ENCODE measurements at regions of chr6 and their contacts with region 1.

Region 1: GRCh38 chr6:42260972-42261371 is 43.3 kb upstream of the MRPS10 start:
- DNase-seq: peak; percentile 22 to 42 (median 37)
- H3K4me3 ChIP-seq: no peak overlapping the region
- H3K27ac ChIP-seq: no peak overlapping the region
- H3K4me1 ChIP-seq: no peaks in the 10 kb centered on the region
- H3K27me3 ChIP-seq: no peaks in the 10 kb centered on the region

Region 2: GRCh38 chr6:42175860-42176259 is 85.1 kb before region 1 on chr6:
- CTCF ChIA-PET with region 1: no interaction called
- POLR2A ChIA-PET with region 1: no interaction called
- DNase-seq: peak in 1 of 3 donors; percentile 8
- H3K4me3 ChIP-seq: no peak overlapping the region
- H3K27ac ChIP-seq: no peak overlapping the region
- H3K4me1 ChIP-seq: peaks cover 0 to 9% (median 6%) of the 10 kb centered on the region in 4 experiments
- H3K27me3 ChIP-seq: peaks cover 0 to 5% (median 0%) of the 10 kb centered on the region in 5 experiments

Region 3: DNA sequence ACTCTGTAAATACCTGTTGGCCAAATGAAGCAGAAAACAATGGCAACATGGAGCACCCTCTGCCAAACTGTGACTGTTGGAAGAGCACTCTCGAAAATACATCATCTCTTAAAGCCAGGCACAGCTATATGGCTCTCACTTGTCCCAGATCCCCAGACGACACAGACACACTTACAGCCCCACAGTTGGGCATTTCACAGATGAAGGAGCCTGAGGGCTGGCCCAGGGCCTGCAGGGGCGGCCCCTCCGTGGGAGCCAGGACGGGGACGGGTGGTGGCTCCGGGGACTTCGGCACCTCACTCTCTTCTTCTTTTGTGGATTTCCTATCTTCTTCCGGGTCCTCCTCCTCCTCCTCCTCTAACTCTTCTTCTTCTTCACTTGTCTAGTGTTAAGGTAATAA is 24.9 kb before region 1 on chr6:
- CTCF ChIA-PET with region 1: no interaction called
- POLR2A ChIA-PET with region 1: no interaction called
- DNase-seq: no peak
- H3K4me3 ChIP-seq: no peak overlapping the region
- H3K27ac ChIP-seq: no peak overlapping the region
- H3K4me1 ChIP-seq: no peaks in the 10 kb centered on the region
- H3K27me3 ChIP-seq: no peaks in the 10 kb centered on the region

Region 4: GRCh38 chr6:42276034-42276890 is 15.3 kb after region 1 on chr6:
- CTCF ChIA-PET with region 1: interaction called, 10 read pairs
- POLR2A ChIA-PET with region 1: interaction called, 4 read pairs
- DNase-seq: no peak
- H3K4me3 ChIP-seq: no peak overlapping the region
- H3K27ac ChIP-seq: no peak overlapping the region
- H3K4me1 ChIP-seq: peaks cover 0 to 23% (median 14%) of the 10 kb centered on the region in 4 experiments
- H3K27me3 ChIP-seq: no peaks in the 10 kb centered on the region

Region 5: DNA sequence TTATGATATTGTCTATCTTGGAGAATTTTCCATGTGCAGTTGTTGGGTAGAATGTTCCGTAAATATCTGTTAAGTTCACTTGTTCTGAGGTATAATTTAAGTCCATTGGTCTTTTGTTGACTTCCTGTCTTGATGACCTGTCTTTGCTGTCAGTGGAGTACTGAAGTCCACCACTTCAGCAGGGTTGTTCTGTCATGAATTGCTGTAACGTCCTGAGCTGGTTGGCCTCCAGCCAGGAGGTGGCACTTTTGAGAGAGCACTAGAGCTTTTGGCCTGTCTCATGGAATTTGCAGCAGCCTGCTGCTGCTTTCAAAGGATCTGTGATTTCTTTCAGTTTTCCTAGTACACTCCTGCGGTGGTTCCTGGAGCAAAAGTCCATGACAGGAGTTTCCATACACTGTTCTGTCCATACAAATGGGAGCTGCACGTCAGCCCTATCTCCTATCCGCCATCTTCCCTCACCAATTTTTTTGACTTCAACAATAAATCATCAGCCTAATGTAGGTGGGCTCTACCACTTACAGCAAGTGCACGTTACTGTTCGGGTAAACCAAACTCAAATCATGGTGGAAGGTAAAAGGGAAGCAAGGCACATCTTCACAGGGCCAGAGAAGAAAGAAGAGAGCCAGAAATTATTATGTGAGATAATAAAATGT is 237.6 kb after region 1 on chr6:
- CTCF ChIA-PET with region 1: no interaction called
- POLR2A ChIA-PET with region 1: no interaction called
- DNase-seq: no peak
- H3K4me3 ChIP-seq: no peak overlapping the region
- H3K27ac ChIP-seq: no peak overlapping the region
- H3K4me1 ChIP-seq: no peaks in the 10 kb centered on the region
- H3K27me3 ChIP-seq: no peaks in the 10 kb centered on the region